Transverse colon (tissue), 4 donors: ENCODE measurements at regions of chr2 and their contacts with region 1.

Region 1: GRCh38 chr2:38925982-38926381 is 36.3 kb downstream of the ARHGEF33 start:
- DNase-seq: no peak
- H3K4me3 ChIP-seq: no peak overlapping the region
- H3K27ac ChIP-seq: no peak overlapping the region
- H3K4me1 ChIP-seq: no peaks in the 10 kb centered on the region
- H3K27me3 ChIP-seq: no peaks in the 10 kb centered on the region
- CTCF ChIP-seq: no peak
- EP300 ChIP-seq: no peak
- POLR2A ChIP-seq: no peak

Region 2: DNA sequence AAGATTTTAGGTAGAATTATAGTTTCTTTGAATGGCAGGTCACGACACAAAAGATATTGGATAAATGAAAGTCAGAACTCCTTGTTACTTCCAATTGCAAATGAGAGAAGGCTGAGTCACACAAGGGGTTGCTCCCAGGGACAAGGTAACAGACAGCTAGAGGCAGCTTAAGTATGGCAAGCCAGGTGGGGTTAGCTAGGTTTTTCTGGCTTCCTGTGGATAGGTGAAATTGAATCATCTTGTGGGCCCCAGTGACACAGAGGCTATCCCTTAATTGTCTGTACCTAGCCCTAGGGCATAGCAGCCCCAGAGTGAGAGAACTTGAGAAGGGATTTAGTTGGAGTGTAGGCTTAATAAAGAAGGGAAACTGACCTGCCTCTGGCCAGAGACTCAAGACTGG is 1933.6 kb after region 1 on chr2:
- in situ Hi-C with region 1: no loop called
- intact Hi-C with region 1: loop called (anchors 5 kb)
- DNase-seq: no peak
- H3K4me3 ChIP-seq: no peak overlapping the region
- H3K27ac ChIP-seq: no peak overlapping the region
- H3K4me1 ChIP-seq: no peaks in the 10 kb centered on the region
- H3K27me3 ChIP-seq: no peaks in the 10 kb centered on the region
- CTCF ChIP-seq: no peak
- EP300 ChIP-seq: no peak
- POLR2A ChIP-seq: no peak